B cell (primary cell): ENCODE measurements at regions of chr16 and their contacts with region 1.

Region 1: DNA sequence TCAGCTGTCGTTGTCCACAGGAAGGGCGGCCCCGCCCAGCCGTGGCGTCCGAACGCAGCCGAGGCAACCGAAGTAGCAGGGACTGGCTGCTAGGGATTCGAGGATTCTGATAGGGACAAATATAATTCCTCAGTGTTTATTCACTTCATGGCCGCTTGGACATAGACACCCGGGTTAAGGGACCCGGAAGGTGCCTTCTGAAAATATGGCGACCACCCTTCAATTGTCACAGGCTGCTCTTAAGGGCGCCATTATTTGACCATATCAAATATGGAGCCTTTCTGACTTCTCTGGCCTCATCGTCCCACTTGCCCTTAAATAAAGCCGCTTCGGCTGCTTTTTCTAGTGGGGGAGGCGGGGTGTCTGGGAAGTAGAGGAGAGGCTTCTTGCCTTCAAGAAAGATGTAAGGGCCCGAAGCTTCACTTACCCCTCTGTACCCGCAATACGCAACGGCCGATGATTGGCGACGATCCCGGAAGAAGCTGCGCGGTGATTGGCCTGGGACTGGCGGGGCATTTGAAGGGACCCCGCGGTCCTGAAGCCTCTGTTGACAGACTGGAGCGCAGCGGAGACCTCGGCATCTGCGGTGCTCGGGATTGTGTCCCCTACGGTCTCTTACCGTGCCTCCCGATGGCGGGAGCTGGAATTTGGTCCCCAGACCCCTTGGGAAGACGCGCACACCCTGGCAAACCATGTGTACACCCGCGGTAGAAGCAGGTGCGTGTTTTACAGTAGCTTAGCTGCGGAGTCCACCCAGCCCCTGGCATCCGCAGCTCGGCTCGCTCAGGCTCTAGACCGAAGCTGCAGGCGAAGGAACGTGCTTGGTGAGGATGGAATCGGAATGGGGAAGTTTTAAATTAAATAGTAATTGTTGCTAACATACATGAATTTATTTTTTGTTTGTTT is at the start of gene ZNF688:
- DNase-seq: peak; percentile 97
- ATAC-seq: peak; percentile 86
- H3K4me3 ChIP-seq: peak within 1 kb of the TSS; percentile 72 to 89 (median 86)
- H3K4me3 Mint-ChIP-seq: peak within 1 kb of the TSS; percentile 91
- H3K27ac ChIP-seq: peak within 1 kb of the TSS; percentile 96 to 97
- H3K27ac Mint-ChIP-seq: peak within 1 kb of the TSS; percentile 99
- H3K4me1 ChIP-seq: peaks cover 29 to 43% of the 10 kb centered on the region in 2 donors
- H3K4me1 Mint-ChIP-seq: peaks cover 40% of the 10 kb centered on the region
- H3K27me3 ChIP-seq: no peaks in the 10 kb centered on the region
- H3K27me3 Mint-ChIP-seq: no peaks in the 10 kb centered on the region
- CTCF ChIP-seq: no peak
- total RNA-seq, gene ZNF688: 23.1 and 24.9 TPM in 2 replicates

Region 2: DNA sequence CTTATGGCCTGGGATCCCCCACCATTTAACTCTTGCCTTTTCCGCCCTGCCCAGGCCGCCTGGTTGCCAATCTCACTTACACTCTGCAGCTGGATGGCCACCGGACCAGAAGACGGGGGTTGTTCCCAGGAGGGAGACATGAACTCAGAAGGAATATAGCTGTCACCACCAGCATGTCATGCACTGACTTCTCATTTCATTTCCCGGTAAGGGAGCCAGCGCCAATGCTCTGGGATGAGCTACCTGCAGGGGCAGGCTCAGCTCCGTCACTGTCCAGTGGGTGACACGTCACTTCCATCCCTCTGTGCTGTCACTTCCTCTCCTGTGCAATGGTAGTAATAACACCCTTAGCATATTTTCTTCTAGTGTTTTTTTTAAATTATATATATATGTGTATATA is 72.7 kb before region 1 on chr16:
- CTCF ChIA-PET with region 1: no interaction called
- POLR2A ChIA-PET with region 1: no interaction called
- intact Hi-C with region 1: no loop called
- DNase-seq: no peak
- ATAC-seq: no peak
- H3K4me3 ChIP-seq: no peak overlapping the region
- H3K4me3 Mint-ChIP-seq: no peak overlapping the region
- H3K27ac ChIP-seq: no peak overlapping the region
- H3K27ac Mint-ChIP-seq: no peak overlapping the region
- H3K4me1 ChIP-seq: no peaks in the 10 kb centered on the region
- H3K4me1 Mint-ChIP-seq: no peaks in the 10 kb centered on the region
- H3K27me3 ChIP-seq: no peaks in the 10 kb centered on the region
- H3K27me3 Mint-ChIP-seq: no peaks in the 10 kb centered on the region
- CTCF ChIP-seq: no peak

Region 3: GRCh38 chr16:30534368-30535105 is 37.4 kb before region 1 on chr16 and contains the start of gene ZNF747:
- CTCF ChIA-PET with region 1: interaction called, 9 read pairs
- POLR2A ChIA-PET with region 1: interaction called, 10 read pairs
- intact Hi-C with region 1: loop called (anchors 1 kb)
- DNase-seq: peak; percentile 93
- ATAC-seq: peak; percentile 82
- H3K4me3 ChIP-seq: peak within 1 kb of the TSS; percentile 80 to 93 (median 88)
- H3K4me3 Mint-ChIP-seq: peak within 1 kb of the TSS; percentile 98
- H3K27ac ChIP-seq: peak within 1 kb of the TSS; percentile 89 to 94
- H3K27ac Mint-ChIP-seq: peak within 1 kb of the TSS; percentile 94
- H3K4me1 ChIP-seq: peaks cover 8 to 23% of the 10 kb centered on the region in 2 donors
- H3K4me1 Mint-ChIP-seq: peaks cover 33% of the 10 kb centered on the region
- H3K27me3 ChIP-seq: no peaks in the 10 kb centered on the region
- H3K27me3 Mint-ChIP-seq: no peaks in the 10 kb centered on the region
- CTCF ChIP-seq: no peak
- total RNA-seq, gene ZNF747: 17.3 and 27.1 TPM in 2 replicates

Region 4: GRCh38 chr16:30585400-30586189 is 13.6 kb after region 1 on chr16 and contains the start of gene ZNF785:
- CTCF ChIA-PET with region 1: no interaction called
- POLR2A ChIA-PET with region 1: interaction called, 18 read pairs
- intact Hi-C with region 1: loop called (anchors 1 kb)
- DNase-seq: peak; percentile 95
- ATAC-seq: peak; percentile 99
- H3K4me3 ChIP-seq: peak within 1 kb of the TSS; percentile 56 to 89 (median 75)
- H3K4me3 Mint-ChIP-seq: peak within 1 kb of the TSS; percentile 85
- H3K27ac ChIP-seq: peak within 1 kb of the TSS; percentile 29 to 82
- H3K27ac Mint-ChIP-seq: peak within 1 kb of the TSS; percentile 71
- H3K4me1 ChIP-seq: peaks cover 8 to 21% of the 10 kb centered on the region in 2 donors
- H3K4me1 Mint-ChIP-seq: peaks cover 22% of the 10 kb centered on the region
- H3K27me3 ChIP-seq: no peaks in the 10 kb centered on the region
- H3K27me3 Mint-ChIP-seq: no peaks in the 10 kb centered on the region
- CTCF ChIP-seq: no peak
- total RNA-seq, gene ZNF785: 39.7 and 44.6 TPM in 2 replicates

Region 5: DNA sequence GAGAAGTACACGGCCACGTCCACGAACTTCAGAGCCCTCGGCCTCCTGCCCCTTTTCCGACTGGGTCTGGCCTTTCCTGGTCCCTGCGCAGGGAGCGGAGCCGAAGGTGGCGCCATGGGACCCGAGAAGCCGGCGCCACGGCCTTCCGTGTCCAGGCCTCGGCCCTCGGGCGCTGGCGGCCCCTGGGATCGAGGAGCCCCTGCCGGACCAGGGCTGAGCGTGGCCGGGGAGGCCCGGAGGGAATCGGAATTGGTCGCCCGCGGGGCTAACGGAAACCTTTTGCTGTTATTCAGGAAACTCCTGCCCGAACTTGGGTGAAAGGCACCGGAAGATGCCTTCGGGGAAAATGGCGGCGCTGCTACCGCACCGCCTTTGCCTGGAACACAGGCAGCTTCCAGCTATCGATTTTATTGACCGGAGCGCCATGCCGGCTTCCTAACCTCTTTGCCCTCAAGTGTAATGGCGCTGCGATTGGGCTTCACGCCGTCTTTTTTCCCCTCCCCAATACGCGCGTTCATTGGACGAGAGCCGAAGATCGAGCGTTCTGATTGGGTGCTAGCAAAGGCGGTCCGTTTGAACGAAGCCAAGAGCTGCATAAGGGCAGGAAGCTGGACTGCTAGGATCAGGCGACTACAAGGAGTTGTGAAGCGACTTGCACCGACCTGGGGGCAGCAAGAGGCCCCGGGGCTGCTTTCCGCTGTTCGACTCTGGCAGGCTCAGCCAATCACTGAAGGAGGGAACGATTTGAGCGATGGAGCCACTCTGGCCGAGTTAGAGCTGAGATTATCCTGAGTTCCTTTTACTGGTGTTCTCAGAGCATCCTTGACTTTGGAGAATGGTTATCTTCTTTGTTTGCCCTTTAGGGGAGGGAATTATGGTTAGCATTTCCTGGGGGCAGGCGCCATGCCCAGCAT is 38.2 kb after region 1 on chr16 and contains the start of gene ZNF689:
- CTCF ChIA-PET with region 1: no interaction called
- POLR2A ChIA-PET with region 1: interaction called, 4 read pairs
- intact Hi-C with region 1: loop called (anchors 1 kb)
- DNase-seq: peak; percentile 97
- ATAC-seq: peak; percentile 88
- H3K4me3 ChIP-seq: peak within 1 kb of the TSS; percentile 84 to 98 (median 91)
- H3K4me3 Mint-ChIP-seq: peak within 1 kb of the TSS; percentile 98
- H3K27ac ChIP-seq: peak within 1 kb of the TSS; percentile 82 to 96
- H3K27ac Mint-ChIP-seq: peak within 1 kb of the TSS; percentile 96
- H3K4me1 ChIP-seq: peaks cover 14 to 24% of the 10 kb centered on the region in 2 donors
- H3K4me1 Mint-ChIP-seq: peaks cover 21% of the 10 kb centered on the region
- H3K27me3 ChIP-seq: no peaks in the 10 kb centered on the region
- H3K27me3 Mint-ChIP-seq: no peaks in the 10 kb centered on the region
- CTCF ChIP-seq: no peak
- total RNA-seq, gene ZNF689: 11.9 and 12.4 TPM in 2 replicates

Region 6: DNA sequence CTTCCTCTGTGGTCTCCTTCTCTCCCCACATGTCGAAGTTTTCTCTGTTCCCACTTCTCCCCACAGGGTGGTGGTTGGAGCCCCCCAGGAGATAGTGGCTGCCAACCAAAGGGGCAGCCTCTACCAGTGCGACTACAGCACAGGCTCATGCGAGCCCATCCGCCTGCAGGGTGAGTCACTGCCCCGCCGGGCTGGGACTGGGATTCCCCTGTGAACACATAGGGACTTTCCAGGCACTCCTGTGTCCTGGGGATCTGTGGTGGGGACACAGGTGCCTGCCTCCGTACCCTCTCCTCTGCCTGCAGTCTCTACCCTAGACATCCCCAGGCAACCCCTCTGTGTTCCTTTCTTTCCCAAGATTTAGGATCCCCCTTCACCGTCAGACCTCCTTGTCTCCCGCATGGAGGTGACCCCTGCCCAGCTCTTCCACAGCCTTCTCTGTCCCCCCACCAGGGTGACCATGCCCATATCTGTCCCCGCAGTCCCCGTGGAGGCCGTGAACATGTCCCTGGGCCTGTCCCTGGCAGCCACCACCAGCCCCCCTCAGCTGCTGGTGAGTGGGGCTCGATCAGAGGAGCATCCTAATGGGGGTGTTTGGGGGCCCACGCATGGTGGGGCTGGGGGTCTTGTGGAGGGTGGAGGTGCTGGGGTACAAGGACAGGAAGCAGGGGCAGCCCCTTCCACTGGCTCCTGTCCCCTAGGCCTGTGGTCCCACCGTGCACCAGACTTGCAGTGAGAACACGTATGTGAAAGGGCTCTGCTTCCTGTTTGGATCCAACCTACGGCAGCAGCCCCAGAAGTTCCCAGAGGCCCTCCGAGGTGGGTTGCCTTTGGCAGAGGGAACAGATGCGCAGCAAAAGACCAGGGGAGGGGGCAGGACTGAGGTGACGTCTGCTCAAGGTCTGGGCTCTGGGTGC is 693.6 kb after region 1 on chr16:
- CTCF ChIA-PET with region 1: no interaction called
- POLR2A ChIA-PET with region 1: interaction called, 11 read pairs
- intact Hi-C with region 1: no loop called
- DNase-seq: peak; percentile 79
- ATAC-seq: peak; percentile 90
- H3K4me3 ChIP-seq: no peak overlapping the region
- H3K4me3 Mint-ChIP-seq: peak overlapping the region; percentile 72
- H3K27ac ChIP-seq: no peak overlapping the region
- H3K27ac Mint-ChIP-seq: peak overlapping the region; percentile 80
- H3K4me1 ChIP-seq: peaks cover 38 to 56% of the 10 kb centered on the region in 2 donors
- H3K4me1 Mint-ChIP-seq: peaks cover 47% of the 10 kb centered on the region
- H3K27me3 ChIP-seq: peaks cover 0 to 6% (median 0%) of the 10 kb centered on the region in 4 experiments
- H3K27me3 Mint-ChIP-seq: no peaks in the 10 kb centered on the region
- CTCF ChIP-seq: no peak